ENCODE measurements at regions of chr17 and their contacts with region 1.

Region 1: GRCh38 chr17:9138101-9138717 is 116.9 kb downstream of the NTN1 start:
- DNase-seq: peak; percentile 66
- ATAC-seq: peak; percentile 84 to 88

Region 2: DNA sequence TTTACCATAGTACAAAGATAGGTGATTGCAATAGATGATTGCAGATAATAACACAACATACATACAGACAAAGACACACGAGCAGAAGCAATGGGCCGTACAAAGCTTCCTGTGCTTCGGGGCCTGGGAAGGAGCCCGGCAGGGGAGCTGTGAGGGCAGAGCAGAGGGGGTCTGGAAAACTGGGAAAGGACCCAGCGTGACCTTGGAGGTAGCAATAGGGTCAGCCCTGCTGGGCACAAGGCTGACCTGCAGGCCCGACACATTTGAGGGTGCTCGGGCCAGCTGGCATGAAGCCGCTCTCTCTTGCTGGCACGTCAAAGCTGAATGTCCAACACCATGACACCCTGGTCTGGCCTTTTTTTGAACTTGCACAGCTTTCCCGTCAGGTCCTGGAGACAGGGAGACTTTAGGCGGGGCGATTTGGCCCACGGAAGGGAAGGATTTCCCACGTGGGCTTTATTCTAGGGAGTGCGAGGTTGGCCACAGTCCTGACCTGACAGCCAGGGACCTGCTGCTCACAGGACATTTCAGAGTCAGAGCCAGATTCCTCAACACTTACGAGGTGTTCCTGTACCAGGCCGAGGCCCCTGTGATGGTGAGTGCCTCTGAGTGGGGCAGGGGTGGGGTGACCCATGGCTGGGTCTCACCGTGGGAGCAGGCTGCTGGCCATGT is 33.7 kb before region 1 on chr17:
- intact Hi-C with region 1: loop called in 1 of 2 experiments (anchors 2 kb)
- DNase-seq: peak; percentile 86
- ATAC-seq: peak; percentile 95 to 96

Region 3: DNA sequence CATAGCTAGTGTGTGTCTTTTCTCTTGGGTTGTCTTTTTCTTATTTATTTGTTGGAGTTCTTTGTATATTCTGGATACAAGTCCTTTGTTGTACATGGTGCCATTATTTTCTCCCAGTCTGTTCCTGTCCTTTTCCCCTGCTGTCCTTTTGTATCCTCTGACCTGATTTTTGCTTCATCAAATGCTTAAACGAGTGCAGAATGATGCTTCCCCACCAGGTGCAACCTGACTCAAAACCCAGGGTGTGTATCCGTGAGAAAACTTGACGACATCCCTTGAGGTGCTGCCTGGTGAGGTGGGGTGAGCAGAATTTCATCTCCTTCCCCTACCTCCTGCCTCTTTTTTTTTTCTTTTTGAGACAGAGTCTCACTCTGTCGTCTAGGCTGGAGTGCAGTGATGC is 28.3 kb before region 1 on chr17:
- intact Hi-C with region 1: loop called in 1 of 2 experiments (anchors 2 kb)
- DNase-seq: no peak
- ATAC-seq: no peak